Spleen (tissue), 13 donors: ENCODE measurements at regions of chr1 and their contacts with region 1.

Region 1: GRCh38 chr1:26874896-26875295 is 11.9 kb downstream of the SFN start:
- DNase-seq: no peak
- H3K4me3 ChIP-seq: no peak overlapping the region
- H3K27ac ChIP-seq: no peak overlapping the region
- H3K4me1 ChIP-seq: peaks cover 0 to 9% (median 5%) of the 10 kb centered on the region in 6 donors
- H3K27me3 ChIP-seq: no peaks in the 10 kb centered on the region
- CTCF ChIP-seq: no peak
- POLR2A ChIP-seq: no peak

Region 2: GRCh38 chr1:26602378-26602959 is 272.4 kb before region 1 on chr1:
- intact Hi-C with region 1: loop called (anchors 10 kb)
- DNase-seq: no peak
- H3K4me3 ChIP-seq: no peak overlapping the region
- H3K27ac ChIP-seq: no peak overlapping the region
- H3K4me1 ChIP-seq: peaks cover 0 to 20% (median 10%) of the 10 kb centered on the region in 6 donors
- H3K27me3 ChIP-seq: no peaks in the 10 kb centered on the region
- CTCF ChIP-seq: peak; percentile 86 to 97 (median 92)
- POLR2A ChIP-seq: no peak

Region 3: DNA sequence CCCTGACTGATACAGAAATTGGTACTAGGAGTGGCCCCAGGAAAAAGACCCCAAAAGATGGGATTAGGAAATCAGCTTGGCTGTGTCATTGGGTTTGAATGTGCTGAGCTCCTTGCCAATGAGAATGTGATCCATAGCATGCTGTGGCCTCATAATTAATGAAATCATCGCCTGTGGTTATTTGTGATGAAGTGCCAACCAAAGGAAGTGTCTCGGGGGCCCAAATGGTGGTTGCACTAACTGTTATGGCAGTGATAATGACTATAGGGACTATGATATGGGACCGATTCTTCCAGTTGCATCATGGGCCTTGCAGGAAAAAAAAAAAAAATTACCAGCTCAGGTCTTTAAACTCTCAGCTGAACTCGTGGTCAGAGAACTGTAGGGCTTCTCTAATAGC is 63.8 kb before region 1 on chr1:
- intact Hi-C with region 1: loop called (anchors 10 kb)
- DNase-seq: no peak
- H3K4me3 ChIP-seq: no peak overlapping the region
- H3K27ac ChIP-seq: no peak overlapping the region
- H3K4me1 ChIP-seq: peaks cover 0 to 33% (median 11%) of the 10 kb centered on the region in 6 donors
- H3K27me3 ChIP-seq: no peaks in the 10 kb centered on the region
- CTCF ChIP-seq: no peak
- POLR2A ChIP-seq: no peak